Activated naive CD4-positive, alpha-beta T cell treated with anti-CD3 and anti-CD28 coated beads, Interleukin-2, amount 10 ng/mL, durations not matched to agents 7 days and 5 days (primary cell): ENCODE measurements at regions of chr2 and their contacts with region 1.

Region 1: GRCh38 chr2:177332041-177332991 is 60.3 kb upstream of the AGPS start:
- DNase-seq: peak; percentile 56
- H3K4me3 Mint-ChIP-seq: no peak overlapping the region
- H3K27ac Mint-ChIP-seq: no peak overlapping the region
- H3K4me1 Mint-ChIP-seq: peaks cover 23% of the 10 kb centered on the region
- H3K27me3 Mint-ChIP-seq: no peaks in the 10 kb centered on the region

Region 2: DNA sequence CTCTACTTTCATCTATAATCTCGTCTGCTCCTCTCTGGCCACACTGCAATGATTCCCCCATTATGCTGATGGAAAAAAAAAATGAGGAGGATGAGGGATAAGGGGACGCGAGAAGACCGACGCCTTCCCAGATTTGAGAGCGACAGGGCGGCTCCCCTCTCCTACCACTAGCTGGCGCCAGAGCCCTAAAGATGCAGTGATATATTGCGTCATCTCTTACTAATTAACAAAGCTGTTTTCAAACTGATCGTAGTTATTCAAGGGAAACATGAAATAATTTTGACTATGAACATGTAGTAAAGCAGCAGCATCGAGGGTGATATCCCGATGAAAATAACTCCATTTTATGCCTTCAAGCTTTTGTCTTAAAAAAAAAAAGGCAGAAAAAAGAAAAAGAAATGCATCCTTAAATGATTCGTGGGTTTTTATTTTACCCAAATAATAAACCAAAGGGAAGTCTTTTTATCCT is 167.7 kb before region 1 on chr2:
- CTCF ChIA-PET with region 1: interaction called, 126 read pairs
- DNase-seq: peak; percentile 85
- H3K4me3 Mint-ChIP-seq: no peak overlapping the region
- H3K27ac Mint-ChIP-seq: no peak overlapping the region
- H3K4me1 Mint-ChIP-seq: peaks cover 35% of the 10 kb centered on the region
- H3K27me3 Mint-ChIP-seq: peaks cover 13% of the 10 kb centered on the region

Region 3: GRCh38 chr2:177296040-177296439 is 36.3 kb before region 1 on chr2:
- CTCF ChIA-PET with region 1: interaction called, 10 read pairs
- DNase-seq: no peak
- H3K4me3 Mint-ChIP-seq: no peak overlapping the region
- H3K27ac Mint-ChIP-seq: no peak overlapping the region
- H3K4me1 Mint-ChIP-seq: peaks cover 49% of the 10 kb centered on the region
- H3K27me3 Mint-ChIP-seq: no peaks in the 10 kb centered on the region

Region 4: GRCh38 chr2:177413703-177414102 is 81.4 kb after region 1 on chr2:
- CTCF ChIA-PET with region 1: interaction called, 91 read pairs
- DNase-seq: no peak
- H3K4me3 Mint-ChIP-seq: no peak overlapping the region
- H3K27ac Mint-ChIP-seq: no peak overlapping the region
- H3K4me1 Mint-ChIP-seq: peaks cover 2% of the 10 kb centered on the region
- H3K27me3 Mint-ChIP-seq: no peaks in the 10 kb centered on the region